Right ventricle myocardium inferior (tissue), 1 donor: ENCODE measurements at regions of chr10 and their contacts with region 1.

Region 1: GRCh38 chr10:33155720-33156638 is 178.5 kb downstream of the NRP1 start:
- DNase-seq: no peak
- ATAC-seq: no peak

Region 2: GRCh38 chr10:32795598-32796183 is 360.3 kb before region 1 on chr10:
- intact Hi-C with region 1: loop called (anchors 5 kb)
- DNase-seq: no peak
- ATAC-seq: no peak